ENCODE measurements at regions of chr4 and their contacts with region 1.

Region 1: GRCh38 chr4:56977321-56978012 is at the start of gene NOA1:
- DNase-seq: peak; percentile 99
- H3K4me3 Mint-ChIP-seq: peak within 1 kb of the TSS; percentile 98
- H3K27ac Mint-ChIP-seq: peak within 1 kb of the TSS; percentile 99
- H3K4me1 Mint-ChIP-seq: peaks cover 52% of the 10 kb centered on the region
- H3K27me3 Mint-ChIP-seq: no peaks in the 10 kb centered on the region
- total RNA-seq, gene NOA1: 25.0 to 26.6 TPM

Region 2: DNA sequence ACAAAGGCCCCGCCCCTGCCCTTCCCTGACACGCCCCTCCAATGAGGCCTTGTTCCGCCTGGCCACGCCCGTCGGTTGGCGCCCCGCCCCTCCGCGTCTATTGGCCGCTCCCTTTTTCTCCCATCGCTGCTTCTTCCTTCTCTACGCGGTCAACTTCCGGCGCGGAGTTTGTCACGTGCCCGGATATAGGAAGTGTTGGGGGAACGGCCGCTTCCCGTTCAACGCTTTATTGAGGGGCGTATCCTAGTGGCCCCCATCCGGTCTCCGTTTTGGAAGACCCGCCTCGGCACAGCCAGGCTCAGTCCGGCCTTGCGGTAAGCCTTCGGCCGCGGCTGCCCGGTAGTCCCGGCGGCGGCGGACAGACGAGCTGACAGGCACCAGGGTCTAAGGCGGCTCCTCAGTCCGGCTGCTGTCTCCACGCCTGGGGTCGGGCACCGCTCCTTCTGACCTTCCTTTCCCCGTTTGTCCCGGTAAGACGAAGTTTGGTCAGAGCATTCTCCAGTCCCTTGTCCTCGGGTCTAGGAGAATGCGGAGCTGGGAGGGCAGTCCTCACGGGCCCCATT is 1123.9 kb before region 1 on chr4 and contains the start of gene EXOC1:
- CTCF ChIA-PET with region 1: no interaction called
- POLR2A ChIA-PET with region 1: no interaction called
- intact Hi-C with region 1: loop called (anchors 10 kb)
- DNase-seq: peak; percentile 99
- H3K4me3 Mint-ChIP-seq: peak within 1 kb of the TSS; percentile 7
- H3K27ac Mint-ChIP-seq: peak within 1 kb of the TSS; percentile 82
- H3K4me1 Mint-ChIP-seq: peaks cover 33% of the 10 kb centered on the region
- H3K27me3 Mint-ChIP-seq: no peaks in the 10 kb centered on the region
- total RNA-seq, gene EXOC1: 21.9 to 22.4 TPM

Region 3: GRCh38 chr4:56387023-56388001 is 590.2 kb before region 1 on chr4 and contains the start of gene AASDH:
- CTCF ChIA-PET with region 1: no interaction called
- POLR2A ChIA-PET with region 1: interaction called, 19 read pairs
- intact Hi-C with region 1: loop called (anchors 2 kb)
- DNase-seq: peak; percentile 97
- H3K4me3 Mint-ChIP-seq: peak within 1 kb of the TSS; percentile 93
- H3K27ac Mint-ChIP-seq: peak within 1 kb of the TSS; percentile 99
- H3K4me1 Mint-ChIP-seq: peaks cover 30% of the 10 kb centered on the region
- H3K27me3 Mint-ChIP-seq: no peaks in the 10 kb centered on the region
- total RNA-seq, gene AASDH: 12.0 to 16.6 TPM

Region 4: GRCh38 chr4:56467284-56468096 is 510.0 kb before region 1 on chr4 and contains the start of gene SRP72:
- CTCF ChIA-PET with region 1: no interaction called
- POLR2A ChIA-PET with region 1: no interaction called
- intact Hi-C with region 1: loop called (anchors 10 kb)
- DNase-seq: peak; percentile 92
- H3K4me3 Mint-ChIP-seq: peak within 1 kb of the TSS; percentile 98
- H3K27ac Mint-ChIP-seq: peak within 1 kb of the TSS; percentile 97
- H3K4me1 Mint-ChIP-seq: peaks cover 37% of the 10 kb centered on the region
- H3K27me3 Mint-ChIP-seq: no peaks in the 10 kb centered on the region
- total RNA-seq, gene SRP72: 183 to 184 TPM

Region 5: GRCh38 chr4:56786955-56787354 is 190.5 kb before region 1 on chr4:
- CTCF ChIA-PET with region 1: no interaction called
- POLR2A ChIA-PET with region 1: no interaction called
- intact Hi-C with region 1: no loop called
- DNase-seq: no peak
- H3K4me3 Mint-ChIP-seq: no peak overlapping the region
- H3K27ac Mint-ChIP-seq: no peak overlapping the region
- H3K4me1 Mint-ChIP-seq: no peaks in the 10 kb centered on the region
- H3K27me3 Mint-ChIP-seq: no peaks in the 10 kb centered on the region

Region 6: GRCh38 chr4:56907489-56908205 is 69.8 kb before region 1 on chr4 and contains the start of gene REST:
- CTCF ChIA-PET with region 1: interaction called, 23 read pairs
- POLR2A ChIA-PET with region 1: interaction called, 70 read pairs
- intact Hi-C with region 1: loop called (anchors 1 kb)
- DNase-seq: peak; percentile 80
- H3K4me3 Mint-ChIP-seq: peak within 1 kb of the TSS; percentile 88
- H3K27ac Mint-ChIP-seq: peak within 1 kb of the TSS; percentile 55
- H3K4me1 Mint-ChIP-seq: peaks cover 41% of the 10 kb centered on the region
- H3K27me3 Mint-ChIP-seq: no peaks in the 10 kb centered on the region
- total RNA-seq, gene REST: 46.1 to 47.0 TPM

Region 7: GRCh38 chr4:56990109-56990905 is 12.8 kb after region 1 on chr4:
- CTCF ChIA-PET with region 1: no interaction called
- POLR2A ChIA-PET with region 1: interaction called, 11 read pairs
- intact Hi-C with region 1: no loop called
- DNase-seq: no peak
- H3K4me3 Mint-ChIP-seq: no peak overlapping the region
- H3K27ac Mint-ChIP-seq: peak overlapping the region; percentile 7
- H3K4me1 Mint-ChIP-seq: peaks cover 27% of the 10 kb centered on the region
- H3K27me3 Mint-ChIP-seq: no peaks in the 10 kb centered on the region

Measured in activated CD4-positive, alpha-beta memory T cell treated with anti-CD3 and anti-CD28 coated beads for 36 hours (primary cell).